HepG2 (cell line): ENCODE measurements at regions of chr15 and their contacts with region 1.

Region 1: GRCh38 chr15:41989259-41989933 is 17.0 kb upstream of the EHD4 start:
- DNase-seq: peak; percentile 56
- ATAC-seq: peak; percentile 95
- H3K4me3 ChIP-seq: peak overlapping the region in 1 of 3 experiments; percentile 38; a peak in 2 of 6 replicates
- H3K27ac ChIP-seq: no peak overlapping the region
- H3K4me1 ChIP-seq: peaks cover 11% of the 10 kb centered on the region
- H3K27me3 ChIP-seq: peaks cover 7 to 60% of the 10 kb centered on the region in 2 experiments
- CTCF ChIP-seq: peak; percentile 99
- EP300 ChIP-seq: no peak
- POLR2A ChIP-seq: no peak
- RAD21 ChIP-seq: peak; percentile 96

Region 2: DNA sequence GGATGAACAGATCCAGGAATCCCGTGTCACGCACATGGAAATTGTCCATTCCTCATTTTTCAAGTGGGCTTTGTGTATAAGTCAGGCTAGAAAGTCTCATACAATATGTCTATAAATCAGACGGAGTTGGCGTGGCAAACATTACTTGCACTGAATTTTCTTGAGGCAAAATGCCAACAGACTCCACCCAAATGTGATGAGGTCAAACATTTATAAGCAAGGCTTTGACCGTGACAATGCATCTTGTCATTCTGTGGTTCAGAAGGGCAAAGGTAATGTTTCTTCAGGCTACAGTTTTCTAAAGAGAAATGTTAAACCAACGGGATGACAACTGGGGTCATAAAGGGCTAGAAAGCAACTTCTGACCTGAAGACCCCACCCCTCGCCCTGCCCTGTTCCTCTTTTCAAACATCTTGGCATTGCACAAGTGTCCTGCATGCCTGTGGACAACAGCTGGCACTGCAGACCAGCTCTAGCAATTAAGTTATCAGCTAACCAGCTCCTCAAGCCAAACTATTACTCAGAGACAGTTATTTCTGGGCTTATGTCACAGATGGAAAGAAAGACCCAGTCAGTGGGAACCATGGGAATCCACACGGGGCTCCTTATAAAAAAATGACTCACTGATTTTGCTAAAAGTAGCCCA is 59.1 kb before region 1 on chr15:
- CTCF ChIA-PET with region 1: no interaction called
- POLR2A ChIA-PET with region 1: no interaction called
- in situ Hi-C with region 1: no loop called
- intact Hi-C with region 1: no loop called
- DNase-seq: peak; percentile 15
- ATAC-seq: no peak
- H3K4me3 ChIP-seq: no peak overlapping the region
- H3K27ac ChIP-seq: no peak overlapping the region
- H3K4me1 ChIP-seq: peaks cover 47% of the 10 kb centered on the region
- H3K27me3 ChIP-seq: no peaks in the 10 kb centered on the region
- CTCF ChIP-seq: no peak
- EP300 ChIP-seq: no peak
- POLR2A ChIP-seq: no peak
- RAD21 ChIP-seq: no peak

Region 3: GRCh38 chr15:42056934-42057779 is 67.8 kb after region 1 on chr15:
- CTCF ChIA-PET with region 1: interaction called, 39 read pairs
- POLR2A ChIA-PET with region 1: no interaction called
- in situ Hi-C with region 1: loop called (anchors 5 kb)
- intact Hi-C with region 1: loop called (anchors 1 kb)
- DNase-seq: peak; percentile 80
- ATAC-seq: peak; percentile 97
- H3K4me3 ChIP-seq: peak overlapping the region; percentile 4 to 45 (median 17); a peak in 3 of 6 replicates
- H3K27ac ChIP-seq: no peak overlapping the region
- H3K4me1 ChIP-seq: peaks cover 42% of the 10 kb centered on the region
- H3K27me3 ChIP-seq: peaks cover 0 to 9% of the 10 kb centered on the region in 2 experiments; a peak in 1 of 5 replicates
- CTCF ChIP-seq: peak; percentile 92
- EP300 ChIP-seq: no peak
- POLR2A ChIP-seq: no peak
- RAD21 ChIP-seq: peak; percentile 92

Region 4: DNA sequence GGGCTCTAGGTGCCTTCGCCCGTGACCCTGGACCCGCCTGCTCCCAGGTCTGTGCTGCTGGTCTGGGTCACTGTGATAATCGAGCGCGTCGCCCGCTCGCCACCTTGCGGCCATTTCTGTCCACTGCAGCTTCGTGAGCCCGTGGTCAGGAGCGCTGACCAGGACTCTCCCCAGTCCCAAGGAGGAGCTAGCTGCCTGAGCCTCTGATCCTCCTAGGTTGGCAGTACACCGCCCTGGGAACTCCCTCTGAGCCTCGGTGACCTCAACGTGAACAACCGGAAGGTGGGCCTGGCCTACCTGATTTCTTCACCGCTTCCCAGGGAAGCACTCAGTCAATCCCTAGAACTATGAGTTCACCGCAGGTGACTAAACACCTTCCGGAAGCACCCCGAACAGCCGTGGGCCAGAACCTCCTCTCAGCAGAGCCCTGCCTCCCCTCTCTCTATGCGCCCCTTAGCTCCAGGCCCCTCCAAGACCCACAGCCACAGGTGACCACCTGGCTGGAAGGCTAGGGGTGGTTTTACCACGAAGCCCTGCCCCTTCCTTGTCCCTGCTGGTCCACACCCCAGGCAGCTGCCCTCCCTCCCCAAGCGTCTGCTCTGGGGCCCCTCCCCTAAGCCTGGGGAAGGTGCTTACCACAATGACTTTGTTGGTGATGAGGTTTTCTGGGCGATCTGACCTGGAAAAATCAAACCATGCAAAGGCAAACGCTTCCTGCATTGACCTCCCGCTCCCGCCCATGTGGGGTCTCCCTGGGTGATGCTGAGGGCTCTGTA is 95.3 kb after region 1 on chr15:
- CTCF ChIA-PET with region 1: interaction called, 18 read pairs
- POLR2A ChIA-PET with region 1: interaction called, 4 read pairs
- in situ Hi-C with region 1: no loop called
- intact Hi-C with region 1: loop called (anchors 1 kb)
- DNase-seq: peak; percentile 46
- ATAC-seq: peak; percentile 89
- H3K4me3 ChIP-seq: peak overlapping the region; percentile 11 to 65 (median 32); a peak in 5 of 6 replicates
- H3K27ac ChIP-seq: no peak overlapping the region
- H3K4me1 ChIP-seq: peaks cover 24% of the 10 kb centered on the region
- H3K27me3 ChIP-seq: peaks cover 12 to 71% of the 10 kb centered on the region in 2 experiments
- CTCF ChIP-seq: peak; percentile 98
- EP300 ChIP-seq: no peak
- POLR2A ChIP-seq: no peak
- RAD21 ChIP-seq: peak; percentile 91

Region 5: DNA sequence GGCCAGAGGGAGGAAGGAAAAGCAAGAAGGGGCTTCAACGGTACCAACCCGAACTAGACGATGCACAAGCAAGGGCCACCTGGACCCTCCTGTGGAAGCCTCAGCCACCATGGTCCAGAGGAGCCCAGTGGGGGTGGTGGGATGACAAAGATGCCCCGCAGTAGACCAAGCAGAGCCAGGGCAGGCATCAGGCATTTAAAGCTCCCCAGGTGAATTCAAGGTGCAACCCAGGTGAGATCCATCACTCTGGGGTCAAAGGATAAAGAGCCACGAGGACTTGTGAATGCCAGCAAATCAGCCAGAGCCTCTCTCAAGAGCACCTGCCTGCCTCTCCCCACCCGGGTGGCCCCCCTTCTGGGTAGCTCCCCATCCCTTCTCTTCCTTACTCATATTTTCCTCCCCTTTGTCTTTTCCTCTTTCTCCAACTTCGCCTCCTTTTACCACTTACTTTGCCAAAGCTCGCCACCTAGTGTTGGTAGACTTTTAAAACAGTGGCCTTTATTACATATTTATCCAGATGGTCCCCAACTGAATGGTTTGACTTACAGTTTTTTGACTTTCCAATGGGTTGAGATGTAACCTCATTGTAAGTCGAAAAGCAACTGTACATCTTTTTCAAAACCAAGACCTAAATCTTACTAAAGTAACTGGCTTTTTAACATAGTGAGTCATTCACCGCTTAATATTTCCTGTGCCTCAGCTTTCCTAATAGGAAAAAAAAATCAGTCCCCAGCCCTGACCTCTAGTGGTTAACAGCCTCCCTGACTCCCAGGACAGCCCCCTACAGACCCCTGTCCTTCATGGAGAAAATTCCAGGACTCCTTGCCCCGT is 148.2 kb after region 1 on chr15:
- CTCF ChIA-PET with region 1: interaction called, 5 read pairs
- POLR2A ChIA-PET with region 1: no interaction called
- in situ Hi-C with region 1: loop called (anchors 5 kb)
- intact Hi-C with region 1: no loop called
- DNase-seq: peak; percentile 48
- ATAC-seq: no peak
- H3K4me3 ChIP-seq: no peak overlapping the region
- H3K27ac ChIP-seq: no peak overlapping the region
- H3K4me1 ChIP-seq: peaks cover 81% of the 10 kb centered on the region
- H3K27me3 ChIP-seq: no peaks in the 10 kb centered on the region
- CTCF ChIP-seq: peak; percentile 53
- EP300 ChIP-seq: no peak
- POLR2A ChIP-seq: no peak
- RAD21 ChIP-seq: no peak